Heart left ventricle (tissue), 16 donors: ENCODE measurements at regions of chr9 and their contacts with region 1.

Region 1: GRCh38 chr9:35657546-35658136 is at the start of gene RMRP:
- DNase-seq: peak; percentile 98 to 99 (median 98)
- ATAC-seq: peak; percentile 94 to 97 (median 96)
- H3K4me3 ChIP-seq: peak within 1 kb of the TSS; percentile 72 to 98 (median 88)
- H3K27ac ChIP-seq: peak within 1 kb of the TSS; percentile 93 to 100 (median 97)
- H3K4me1 ChIP-seq: peaks cover 0 to 56% (median 30%) of the 10 kb centered on the region in 12 donors
- H3K27me3 ChIP-seq: no peaks in the 10 kb centered on the region
- CTCF ChIP-seq: peak in 11 of 12 donors; percentile 12 to 55 (median 32)
- POLR2A ChIP-seq: peak in 1 of 2 donors; percentile 31
- total RNA-seq, gene RMRP: 462 to 18,741 (median 5,764) TPM

Region 2: GRCh38 chr9:35489313-35490154 is 168.1 kb before region 1 on chr9 and contains the start of gene RUSC2:
- intact Hi-C with region 1: loop called in 1 of 10 experiments (anchors 5 kb)
- DNase-seq: peak; percentile 87 to 92 (median 91)
- ATAC-seq: peak; percentile 78 to 90 (median 87)
- H3K4me3 ChIP-seq: peak within 1 kb of the TSS; percentile 53 to 97 (median 86)
- H3K27ac ChIP-seq: peak within 1 kb of the TSS; percentile 87 to 98 (median 96)
- H3K4me1 ChIP-seq: peaks cover 5 to 40% (median 31%) of the 10 kb centered on the region in 12 donors
- H3K27me3 ChIP-seq: no peaks in the 10 kb centered on the region
- CTCF ChIP-seq: peak; percentile 17 to 64 (median 46)
- POLR2A ChIP-seq: peak in 1 of 2 donors; percentile 79
- total RNA-seq, gene RUSC2: 23.0 to 56.1 (median 30.5) TPM

Region 3: GRCh38 chr9:35680331-35681105 is 22.9 kb after region 1 on chr9:
- intact Hi-C with region 1: no loop called
- DNase-seq: no peak
- ATAC-seq: peak in 2 of 4 donors; percentile 8 to 16
- H3K4me3 ChIP-seq: no peak overlapping the region
- H3K27ac ChIP-seq: peak overlapping the region in 1 of 12 donors; percentile 98
- H3K4me1 ChIP-seq: peaks cover 0 to 23% (median 10%) of the 10 kb centered on the region in 12 donors
- H3K27me3 ChIP-seq: peaks cover 0 to 5% (median 0%) of the 10 kb centered on the region in 9 donors
- CTCF ChIP-seq: no peak
- POLR2A ChIP-seq: no peak

Region 4: DNA sequence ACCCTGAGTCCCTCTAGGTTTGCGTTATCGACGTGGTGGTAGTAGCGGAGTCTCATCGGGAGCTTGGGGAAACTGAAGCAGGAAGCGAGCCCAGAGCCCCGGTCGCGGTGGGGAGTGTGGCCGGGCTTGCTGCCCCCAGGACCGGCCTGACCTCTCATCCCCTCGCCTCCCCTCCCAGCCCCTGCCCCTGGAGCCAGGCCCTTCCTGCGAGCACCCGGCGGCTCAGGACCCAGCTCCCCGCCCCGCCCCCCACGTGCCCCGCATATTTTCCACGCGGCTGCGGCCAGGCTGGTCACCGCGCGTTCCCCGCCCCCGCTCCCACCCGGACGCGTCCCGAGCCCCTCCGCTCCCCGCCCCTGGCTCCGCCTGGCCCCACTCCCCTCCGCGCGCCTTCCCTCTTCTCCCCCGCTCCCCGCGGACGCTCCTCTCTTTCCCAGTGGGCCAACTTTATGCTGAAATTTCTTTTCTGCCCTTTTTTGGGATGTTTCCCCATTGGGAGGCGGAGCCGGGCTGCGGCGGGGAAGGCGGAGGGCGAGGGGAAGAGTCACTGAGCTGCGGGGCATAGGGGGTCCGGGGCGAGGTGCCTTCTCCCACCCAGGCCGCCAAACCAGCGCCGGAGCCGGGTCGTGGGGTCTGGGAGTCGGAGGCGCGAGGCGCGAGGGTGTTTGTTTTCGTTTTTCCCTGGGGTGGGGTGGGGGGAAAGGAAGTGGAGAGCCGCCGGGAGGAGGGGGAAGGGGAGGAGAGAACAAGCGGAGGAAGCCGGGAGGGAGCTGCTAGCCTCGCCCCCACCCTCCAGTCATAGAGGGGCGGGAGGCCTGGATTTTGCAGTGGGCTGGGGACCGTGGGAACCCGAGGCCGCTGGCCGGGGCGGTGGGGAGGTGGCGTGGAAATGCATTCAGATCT is 33.0 kb after region 1 on chr9:
- intact Hi-C with region 1: loop called in 9 of 10 experiments (anchors 1 to 5 kb)
- DNase-seq: peak; percentile 87 to 89 (median 89)
- ATAC-seq: peak; percentile 23 to 65 (median 60)
- H3K4me3 ChIP-seq: peak overlapping the region; percentile 61 to 93 (median 74)
- H3K27ac ChIP-seq: peak overlapping the region; percentile 88 to 98 (median 97)
- H3K4me1 ChIP-seq: peaks cover 2 to 44% (median 26%) of the 10 kb centered on the region in 12 donors
- H3K27me3 ChIP-seq: no peaks in the 10 kb centered on the region
- CTCF ChIP-seq: no peak
- POLR2A ChIP-seq: peak in 1 of 2 donors; percentile 34

Region 5: DNA sequence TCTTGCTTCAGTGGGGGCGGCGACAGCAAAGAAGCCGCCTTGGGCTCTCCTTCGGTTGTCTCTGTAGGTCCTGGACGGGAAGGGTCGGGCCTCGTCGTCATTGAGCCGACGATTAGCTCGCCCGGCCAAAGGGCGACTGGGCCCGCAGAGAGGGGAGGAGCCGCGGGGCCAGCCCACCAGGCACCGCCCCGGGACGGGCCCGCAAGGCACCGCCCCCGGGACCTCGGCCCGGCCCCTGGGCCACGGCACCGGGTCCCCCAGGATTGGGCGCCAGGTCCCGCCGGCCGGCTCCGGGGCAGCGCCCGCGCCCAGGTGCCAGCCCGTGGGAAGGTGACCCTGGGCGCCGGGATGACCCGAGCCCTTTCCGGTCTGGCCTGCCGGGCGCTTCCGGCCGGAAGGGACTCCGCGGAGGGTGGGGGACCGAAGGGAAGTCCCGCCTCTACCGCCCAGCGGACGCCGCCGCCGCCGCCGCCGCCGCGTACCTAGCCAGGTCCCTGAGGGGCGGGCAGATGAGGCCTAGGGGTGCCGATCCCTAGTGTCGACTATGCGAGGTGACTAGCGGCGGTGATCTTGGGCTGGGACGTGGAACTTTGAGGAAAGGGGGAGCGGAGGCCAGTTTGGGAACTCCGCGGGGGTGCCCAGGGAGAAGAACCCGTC is 91.3 kb after region 1 on chr9 and contains the starts of genes GBA2 and RGP1:
- intact Hi-C with region 1: loop called in 3 of 10 experiments (anchors 5 kb)
- DNase-seq: peak; percentile 88 to 94 (median 93)
- ATAC-seq: peak; percentile 81 to 94 (median 92)
- H3K4me3 ChIP-seq: peak within 1 kb of the TSS; percentile 71 to 99 (median 88)
- H3K27ac ChIP-seq: peak within 1 kb of the TSS; percentile 92 to 99 (median 97)
- H3K4me1 ChIP-seq: peaks cover 2 to 60% (median 49%) of the 10 kb centered on the region in 12 donors
- H3K27me3 ChIP-seq: no peaks in the 10 kb centered on the region
- CTCF ChIP-seq: no peak
- POLR2A ChIP-seq: peak; percentile 19 to 87
- total RNA-seq, gene GBA2: 52.1 to 93.8 (median 65.5) TPM
- total RNA-seq, gene RGP1: 25.4 to 38.8 (median 32.7) TPM

Region 6: GRCh38 chr9:35814841-35815543 is 157.4 kb after region 1 on chr9 and contains the start of gene HINT2:
- intact Hi-C with region 1: loop called in 3 of 10 experiments (anchors 5 to 10 kb)
- DNase-seq: peak; percentile 96 to 98 (median 97)
- ATAC-seq: peak; percentile 93 to 95 (median 93)
- H3K4me3 ChIP-seq: peak within 1 kb of the TSS; percentile 67 to 99 (median 85)
- H3K27ac ChIP-seq: peak within 1 kb of the TSS; percentile 89 to 100 (median 98)
- H3K4me1 ChIP-seq: peaks cover 5 to 40% (median 31%) of the 10 kb centered on the region in 12 donors
- H3K27me3 ChIP-seq: no peaks in the 10 kb centered on the region
- CTCF ChIP-seq: peak in 1 of 12 donors; percentile 5
- POLR2A ChIP-seq: peak; percentile 86 to 97
- total RNA-seq, gene HINT2: 48.7 to 77.5 (median 57.4) TPM

Region 7: GRCh38 chr9:35829084-35829763 is 171.6 kb after region 1 on chr9 and contains the start of gene TMEM8B:
- intact Hi-C with region 1: loop called in 2 of 10 experiments (anchors 5 to 10 kb)
- DNase-seq: peak; percentile 97 to 99 (median 98)
- ATAC-seq: peak; percentile 89 to 95 (median 92)
- H3K4me3 ChIP-seq: peak within 1 kb of the TSS; percentile 65 to 97 (median 78)
- H3K27ac ChIP-seq: peak within 1 kb of the TSS; percentile 85 to 99 (median 94)
- H3K4me1 ChIP-seq: peaks cover 3 to 53% (median 39%) of the 10 kb centered on the region in 12 donors
- H3K27me3 ChIP-seq: no peaks in the 10 kb centered on the region
- CTCF ChIP-seq: no peak
- POLR2A ChIP-seq: peak in 1 of 2 donors; percentile 57
- total RNA-seq, gene TMEM8B: 10.8 to 21.4 (median 18.2) TPM

Region 8: GRCh38 chr9:35882263-35882848 is 224.7 kb after region 1 on chr9:
- intact Hi-C with region 1: loop called in 2 of 10 experiments (anchors 10 kb)
- DNase-seq: peak; percentile 81 to 92 (median 82)
- ATAC-seq: peak in 3 of 4 donors; percentile 82 to 85 (median 83)
- H3K4me3 ChIP-seq: no peak overlapping the region
- H3K27ac ChIP-seq: no peak overlapping the region
- H3K4me1 ChIP-seq: no peaks in the 10 kb centered on the region
- H3K27me3 ChIP-seq: peaks cover 0 to 10% (median 0%) of the 10 kb centered on the region in 9 donors
- CTCF ChIP-seq: peak; percentile 93 to 99 (median 98)
- POLR2A ChIP-seq: no peak